ENCODE measurements at regions of chr9 and their contacts with region 1.

Region 1: GRCh38 chr9:5578018-5578697 is 50.7 kb upstream of the RIC1 start:
- DNase-seq: no peak
- H3K4me3 Mint-ChIP-seq: no peak overlapping the region
- H3K27ac Mint-ChIP-seq: peak overlapping the region; percentile 21
- H3K4me1 Mint-ChIP-seq: peaks cover 51% of the 10 kb centered on the region
- H3K27me3 Mint-ChIP-seq: no peaks in the 10 kb centered on the region

Region 2: GRCh38 chr9:5557606-5558587 is 20.3 kb before region 1 on chr9:
- intact Hi-C with region 1: loop called (anchors 1 kb)
- DNase-seq: peak; percentile 71
- H3K4me3 Mint-ChIP-seq: peak overlapping the region; percentile 65
- H3K27ac Mint-ChIP-seq: peak overlapping the region; percentile 84
- H3K4me1 Mint-ChIP-seq: peaks cover 55% of the 10 kb centered on the region
- H3K27me3 Mint-ChIP-seq: no peaks in the 10 kb centered on the region

Measured in activated T-helper 1 cell treated with anti-CD3 and anti-CD28 coated beads, Interleukin-12 subunit alpha, Interleukin-12 subunit beta, Interleukin-2, Interleukin-4 antibody, amounts not matched to agents 30 ng/mL and 10 ng/mL and 1 ng/mL, durations not matched to agents 14 hours and 24 hours and 36 hours (primary cell).